ENCODE measurements at regions of chr22 and their contacts with region 1.

Region 1: DNA sequence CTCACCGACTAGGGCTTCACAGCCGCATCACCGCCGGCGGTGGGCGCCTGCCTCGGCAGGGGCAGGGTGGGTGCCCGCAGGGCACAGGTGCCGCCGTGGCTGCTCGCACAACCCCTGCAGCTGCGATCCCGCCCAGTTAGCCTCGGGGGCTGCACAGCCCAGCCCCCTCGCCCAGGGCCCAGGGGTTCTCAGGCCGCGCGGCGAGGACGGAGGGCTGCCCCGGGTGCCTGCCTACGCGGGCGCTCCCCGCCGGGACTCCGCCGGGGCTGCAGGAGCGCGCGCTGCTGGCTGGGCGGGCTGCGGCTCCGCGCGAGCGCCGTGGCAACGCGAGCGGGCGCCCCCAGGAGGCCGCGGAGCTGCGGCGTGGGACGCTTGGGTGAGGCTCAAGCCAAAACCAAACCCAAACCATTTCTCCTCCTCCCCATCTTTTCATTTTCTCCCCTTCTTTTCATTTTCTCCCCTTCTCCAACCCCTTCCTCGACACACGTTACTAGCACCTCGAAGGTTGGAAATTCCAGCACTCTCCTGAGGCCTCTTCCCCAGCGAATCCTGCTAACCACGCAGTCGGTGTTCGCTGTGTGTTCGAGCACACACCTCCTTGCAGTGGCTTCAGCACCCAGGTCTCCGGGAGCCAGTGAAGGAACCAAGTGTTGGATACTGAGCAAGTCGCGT is at the start of gene MICAL3:
- DNase-seq: peak; percentile 35 to 46
- ATAC-seq: peak; percentile 54 to 56
- H3K4me3 ChIP-seq: peak within 1 kb of the TSS; percentile 66 to 96 (median 76)
- H3K27ac ChIP-seq: peak within 1 kb of the TSS; percentile 89 to 95 (median 94)
- H3K4me1 ChIP-seq: peaks cover 30 to 45% of the 10 kb centered on the region in 2 donors
- H3K27me3 ChIP-seq: no peaks in the 10 kb centered on the region
- CTCF ChIP-seq: peak; percentile 54 to 80 (median 67)
- POLR2A ChIP-seq: peak; percentile 83 to 85
- total RNA-seq, gene MICAL3: 6.0 to 9.8 (median 8.1) TPM

Region 2: DNA sequence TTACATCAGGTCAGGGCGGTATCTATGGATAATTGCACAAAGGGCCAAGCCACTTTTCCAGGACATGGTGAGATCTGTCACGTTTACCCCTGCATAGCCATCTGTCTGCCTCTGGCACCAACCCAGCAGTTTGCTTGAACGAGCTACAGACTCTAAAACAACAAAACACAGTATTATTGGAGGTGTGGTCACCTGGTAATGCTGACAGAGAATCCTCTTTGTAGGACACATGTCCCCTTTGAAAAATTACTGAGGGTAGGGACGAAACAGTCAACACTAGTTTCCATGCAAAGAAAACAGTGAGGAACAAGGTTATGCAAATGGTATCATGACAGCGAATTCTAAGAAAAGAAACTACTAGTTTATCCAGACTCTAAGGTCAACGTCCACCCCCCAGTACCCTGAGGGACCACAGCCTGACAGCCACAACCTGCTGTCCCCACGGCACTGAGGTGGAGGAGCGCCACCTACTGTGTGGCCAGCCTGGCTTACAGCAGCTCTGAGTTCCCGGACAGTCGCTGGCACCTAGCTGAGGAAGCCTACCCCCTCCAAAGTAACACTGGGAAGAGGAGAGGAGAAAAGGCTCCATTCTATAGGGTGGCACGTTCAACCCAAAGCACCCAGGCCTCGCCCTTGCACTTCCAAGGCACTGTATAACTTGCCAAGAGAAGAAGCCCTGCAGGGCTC is 132.8 kb before region 1 on chr22:
- in situ Hi-C with region 1: no loop called
- intact Hi-C with region 1: loop called (anchors 2 kb)
- DNase-seq: peak; percentile 73 to 85
- ATAC-seq: peak; percentile 37 to 49
- H3K4me3 ChIP-seq: no peak overlapping the region
- H3K27ac ChIP-seq: peak overlapping the region; percentile 90 to 95 (median 94)
- H3K4me1 ChIP-seq: peaks cover 41 to 45% of the 10 kb centered on the region in 2 donors
- H3K27me3 ChIP-seq: no peaks in the 10 kb centered on the region
- CTCF ChIP-seq: peak; percentile 79 to 89 (median 84)
- POLR2A ChIP-seq: no peak

Region 3: GRCh38 chr22:17950651-17951214 is 73.7 kb before region 1 on chr22:
- in situ Hi-C with region 1: no loop called
- intact Hi-C with region 1: loop called (anchors 2 kb)
- DNase-seq: peak; percentile 65 to 90
- ATAC-seq: peak; percentile 62 to 85
- H3K4me3 ChIP-seq: no peak overlapping the region
- H3K27ac ChIP-seq: peak overlapping the region; percentile 78 to 81 (median 79)
- H3K4me1 ChIP-seq: peaks cover 44 to 52% of the 10 kb centered on the region in 2 donors
- H3K27me3 ChIP-seq: no peaks in the 10 kb centered on the region
- CTCF ChIP-seq: no peak
- POLR2A ChIP-seq: no peak

Region 4: GRCh38 chr22:18057568-18058209 is 33.3 kb after region 1 on chr22:
- in situ Hi-C with region 1: loop called in 1 of 4 experiments (anchors 10 kb)
- intact Hi-C with region 1: loop called (anchors 5 kb)
- DNase-seq: peak; percentile 83 to 86
- ATAC-seq: peak; percentile 79 to 88
- H3K4me3 ChIP-seq: no peak overlapping the region
- H3K27ac ChIP-seq: peak overlapping the region; percentile 84 to 94 (median 90)
- H3K4me1 ChIP-seq: peaks cover 33 to 38% of the 10 kb centered on the region in 2 donors
- H3K27me3 ChIP-seq: no peaks in the 10 kb centered on the region
- CTCF ChIP-seq: no peak
- POLR2A ChIP-seq: peak; percentile 63 to 81

Measured in gastrocnemius medialis (tissue), 4 donors.